SK-N-SH (cell line): ENCODE measurements at regions of chr16 and their contacts with region 1.

Region 1: DNA sequence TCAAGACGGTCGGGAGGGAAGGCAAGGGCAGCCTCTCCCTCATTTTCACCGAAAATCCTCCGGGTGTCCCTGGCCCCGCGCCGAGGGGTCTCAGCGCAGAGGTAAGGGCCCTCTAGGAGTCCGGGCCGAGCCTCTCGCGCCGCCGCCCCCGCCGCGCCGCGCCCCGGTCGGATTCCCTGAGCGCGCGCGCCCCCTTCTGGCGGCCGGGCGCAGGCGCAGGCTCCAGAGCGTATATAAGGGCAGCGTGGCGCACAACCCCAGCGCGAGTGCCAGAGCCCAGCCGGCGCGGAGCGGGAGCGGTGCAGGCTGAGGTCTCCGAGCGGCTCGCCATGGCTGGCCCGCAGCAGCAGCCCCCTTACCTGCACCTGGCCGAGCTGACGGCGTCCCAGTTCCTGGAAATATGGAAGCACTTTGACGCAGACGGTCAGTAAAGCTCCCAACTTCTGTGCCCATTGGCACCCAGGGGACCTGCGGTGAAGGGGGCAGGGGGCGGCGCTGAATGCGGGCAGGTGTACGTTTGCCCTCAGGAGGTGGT is at the start of gene CALB2:
- DNase-seq: peak; percentile 91
- H3K4me3 ChIP-seq: peak within 1 kb of the TSS; percentile 31 to 58; a peak in 2 of 4 replicates
- H3K27ac ChIP-seq: no peak within 1 kb of the TSS
- H3K4me1 ChIP-seq: peaks cover 0 to 8% of the 10 kb centered on the region in 2 experiments; a peak in 1 of 4 replicates
- H3K27me3 ChIP-seq: peaks cover 14% of the 10 kb centered on the region; the same call in 1 of the 2 replicates
- CTCF ChIP-seq: peak; percentile 91
- EP300 ChIP-seq: no peak
- RAD21 ChIP-seq: peak; percentile 72
- polyA plus RNA-seq, gene CALB2: 0.12 and 0.23 TPM in 2 replicates

Region 2: GRCh38 chr16:71258372-71258771 is 100.2 kb before region 1 on chr16:
- CTCF ChIA-PET with region 1: no interaction called
- POLR2A ChIA-PET with region 1: no interaction called
- DNase-seq: no peak
- H3K4me3 ChIP-seq: no peak overlapping the region
- H3K27ac ChIP-seq: no peak overlapping the region
- H3K4me1 ChIP-seq: peaks cover 0 to 9% of the 10 kb centered on the region in 2 experiments; a peak in 2 of 4 replicates
- H3K27me3 ChIP-seq: no peaks in the 10 kb centered on the region; the same call in 1 of the 2 replicates
- CTCF ChIP-seq: no peak
- EP300 ChIP-seq: no peak
- RAD21 ChIP-seq: no peak

Region 3: GRCh38 chr16:71311553-71312158 is 46.9 kb before region 1 on chr16:
- CTCF ChIA-PET with region 1: interaction called, 35 read pairs
- POLR2A ChIA-PET with region 1: no interaction called
- DNase-seq: peak; percentile 61
- H3K4me3 ChIP-seq: no peak overlapping the region; a peak in 1 of 4 replicates
- H3K27ac ChIP-seq: no peak overlapping the region
- H3K4me1 ChIP-seq: no peaks in the 10 kb centered on the region
- H3K27me3 ChIP-seq: no peaks in the 10 kb centered on the region
- CTCF ChIP-seq: peak; percentile 85
- EP300 ChIP-seq: no peak
- RAD21 ChIP-seq: peak; percentile 88

Region 4: DNA sequence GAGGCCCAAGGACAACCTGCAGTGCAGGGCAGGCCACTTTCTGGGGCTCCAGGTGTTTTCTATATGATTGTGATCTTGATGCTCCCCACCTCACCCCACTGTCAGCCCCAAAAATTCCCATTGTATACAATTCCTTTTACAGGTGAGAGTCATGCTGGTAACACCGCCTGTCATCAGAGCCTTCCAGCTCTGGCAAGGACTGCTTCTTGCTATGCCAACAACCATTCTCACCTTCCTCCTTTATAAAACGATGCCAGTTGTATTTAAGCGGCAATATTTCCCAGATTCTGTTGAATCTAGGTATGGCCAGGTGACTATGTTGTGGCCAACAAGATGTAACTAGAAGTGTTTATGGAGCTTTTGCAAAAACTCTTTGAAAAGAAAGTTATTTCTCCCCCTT is 30.4 kb before region 1 on chr16:
- CTCF ChIA-PET with region 1: interaction called, 15 read pairs
- POLR2A ChIA-PET with region 1: no interaction called
- DNase-seq: no peak
- H3K4me3 ChIP-seq: no peak overlapping the region
- H3K27ac ChIP-seq: no peak overlapping the region
- H3K4me1 ChIP-seq: no peaks in the 10 kb centered on the region
- H3K27me3 ChIP-seq: no peaks in the 10 kb centered on the region
- CTCF ChIP-seq: no peak
- EP300 ChIP-seq: no peak
- RAD21 ChIP-seq: no peak

Region 5: GRCh38 chr16:71344315-71344905 is 14.1 kb before region 1 on chr16:
- CTCF ChIA-PET with region 1: interaction called, 33 read pairs
- POLR2A ChIA-PET with region 1: no interaction called
- DNase-seq: no peak
- H3K4me3 ChIP-seq: no peak overlapping the region
- H3K27ac ChIP-seq: no peak overlapping the region
- H3K4me1 ChIP-seq: no peaks in the 10 kb centered on the region
- H3K27me3 ChIP-seq: no peaks in the 10 kb centered on the region
- CTCF ChIP-seq: no peak
- EP300 ChIP-seq: no peak
- RAD21 ChIP-seq: no peak

Region 6: GRCh38 chr16:71373073-71373472 is 14.5 kb after region 1 on chr16:
- CTCF ChIA-PET with region 1: interaction called, 26 read pairs
- POLR2A ChIA-PET with region 1: no interaction called
- DNase-seq: no peak
- H3K4me3 ChIP-seq: no peak overlapping the region
- H3K27ac ChIP-seq: no peak overlapping the region
- H3K4me1 ChIP-seq: no peaks in the 10 kb centered on the region
- H3K27me3 ChIP-seq: no peaks in the 10 kb centered on the region; the same call in 1 of the 2 replicates
- CTCF ChIP-seq: no peak
- EP300 ChIP-seq: no peak
- RAD21 ChIP-seq: no peak

Region 7: DNA sequence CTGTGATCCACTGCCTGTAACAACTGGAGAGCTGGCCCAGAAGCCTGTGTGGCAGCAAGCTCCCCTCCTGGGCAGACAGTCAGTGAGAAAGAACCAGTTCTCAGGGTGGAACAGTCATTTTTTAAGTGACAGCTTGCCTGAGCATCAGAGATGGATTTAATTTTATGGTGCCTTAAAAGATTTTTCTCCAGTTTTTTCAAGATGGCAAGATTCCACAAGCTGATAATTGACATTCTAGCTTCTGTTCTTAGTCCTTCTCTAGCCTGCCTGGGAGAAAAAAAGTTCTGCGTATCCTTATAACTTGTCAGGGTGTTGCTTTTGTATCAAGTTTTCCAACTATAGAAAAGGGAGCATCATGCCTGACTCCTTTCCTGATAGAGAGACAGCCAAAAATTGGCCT is 21.2 kb after region 1 on chr16:
- CTCF ChIA-PET with region 1: interaction called, 26 read pairs
- POLR2A ChIA-PET with region 1: no interaction called
- DNase-seq: no peak
- H3K4me3 ChIP-seq: no peak overlapping the region
- H3K27ac ChIP-seq: no peak overlapping the region
- H3K4me1 ChIP-seq: no peaks in the 10 kb centered on the region
- H3K27me3 ChIP-seq: peaks cover 8% of the 10 kb centered on the region; the same call in 1 of the 2 replicates
- CTCF ChIP-seq: no peak
- EP300 ChIP-seq: no peak
- RAD21 ChIP-seq: no peak

Region 8: GRCh38 chr16:71404364-71404763 is 45.8 kb after region 1 on chr16:
- CTCF ChIA-PET with region 1: no interaction called
- POLR2A ChIA-PET with region 1: no interaction called
- DNase-seq: no peak
- H3K4me3 ChIP-seq: no peak overlapping the region
- H3K27ac ChIP-seq: no peak overlapping the region
- H3K4me1 ChIP-seq: no peaks in the 10 kb centered on the region
- H3K27me3 ChIP-seq: peaks cover 13% of the 10 kb centered on the region
- CTCF ChIP-seq: no peak
- EP300 ChIP-seq: no peak
- RAD21 ChIP-seq: no peak

Region 9: DNA sequence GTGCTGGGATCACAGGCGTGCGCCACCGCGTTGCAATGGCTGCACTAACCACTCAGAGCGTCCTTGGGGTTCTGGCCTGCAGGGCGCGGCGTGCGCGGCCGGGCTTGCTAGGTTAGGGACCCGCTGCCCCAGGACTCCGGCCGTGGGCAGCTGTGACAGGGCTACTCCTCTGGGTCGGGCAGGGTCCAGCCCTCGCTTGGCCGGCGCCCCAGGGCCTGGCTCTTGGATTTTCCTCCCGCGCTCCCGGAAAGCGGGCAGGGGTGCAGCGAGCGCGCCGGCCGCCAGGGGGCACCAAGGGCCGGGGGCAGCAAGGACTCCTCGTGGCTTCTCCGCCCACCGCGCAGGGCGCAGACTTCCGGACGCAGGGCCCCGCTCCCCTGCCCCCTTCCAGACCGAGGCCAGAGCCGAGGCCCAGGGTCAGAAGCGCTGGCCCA is 82.8 kb after region 1 on chr16:
- CTCF ChIA-PET with region 1: no interaction called
- POLR2A ChIA-PET with region 1: no interaction called
- DNase-seq: peak; percentile 54
- H3K4me3 ChIP-seq: no peak overlapping the region
- H3K27ac ChIP-seq: no peak overlapping the region
- H3K4me1 ChIP-seq: no peaks in the 10 kb centered on the region
- H3K27me3 ChIP-seq: peaks cover 8% of the 10 kb centered on the region; the same call in 1 of the 2 replicates
- CTCF ChIP-seq: peak; percentile 20
- EP300 ChIP-seq: no peak
- RAD21 ChIP-seq: no peak